Naive thymus-derived CD8-positive, alpha-beta T cell (primary cell): ENCODE measurements at regions of chr12 and their contacts with region 1.

Region 1: DNA sequence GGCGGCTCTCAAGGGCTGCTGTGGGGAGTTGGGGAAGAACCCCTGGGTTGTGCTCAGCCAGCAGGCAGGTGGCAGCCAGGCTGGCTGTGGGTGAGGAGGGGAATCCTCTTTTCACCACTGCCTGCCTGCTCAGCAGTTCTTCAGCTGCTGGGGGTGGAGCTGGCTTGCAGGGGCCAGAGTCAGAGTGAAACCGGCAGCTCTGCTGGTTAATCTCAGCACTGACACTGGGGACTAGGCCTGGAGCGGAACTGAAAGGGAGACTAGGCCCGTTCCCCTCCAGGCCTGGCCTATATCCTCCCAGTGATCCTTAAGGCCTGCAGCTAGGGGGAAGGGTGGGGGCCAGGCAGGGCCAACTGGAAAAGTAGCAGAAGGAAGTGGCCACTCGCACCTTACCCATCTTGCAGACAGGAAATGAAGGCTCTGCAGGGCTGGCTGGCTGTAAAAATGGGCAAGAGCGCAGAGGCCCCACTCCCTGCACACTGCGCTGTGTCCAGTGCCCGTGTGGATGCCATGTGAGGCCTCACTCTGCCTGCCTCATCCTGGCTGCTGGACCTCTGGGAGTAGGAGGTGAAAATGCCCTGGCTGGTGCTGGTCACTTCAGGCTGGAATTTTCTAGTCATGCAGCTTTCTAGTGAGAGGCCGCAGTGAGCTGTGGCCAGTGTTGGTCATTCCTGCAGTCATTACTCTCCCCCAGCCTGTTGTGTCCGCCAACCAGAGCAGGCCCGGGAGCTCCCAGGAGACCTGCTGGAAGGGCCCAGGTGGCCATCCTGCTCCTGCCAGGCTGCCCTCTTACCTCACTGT is 39.4 kb downstream of the SH2B3 start:
- DNase-seq: peak; percentile 44 to 83 (median 70)
- ATAC-seq: peak; percentile 98 to 99
- H3K4me3 Mint-ChIP-seq: peak overlapping the region in 9 of 10 donors; percentile 39 to 77 (median 71)
- H3K27ac Mint-ChIP-seq: peak overlapping the region; percentile 73 to 95 (median 90)
- H3K4me1 Mint-ChIP-seq: peaks cover 29 to 83% (median 67%) of the 10 kb centered on the region in 4 donors
- H3K27me3 Mint-ChIP-seq: no peaks in the 10 kb centered on the region

Region 2: DNA sequence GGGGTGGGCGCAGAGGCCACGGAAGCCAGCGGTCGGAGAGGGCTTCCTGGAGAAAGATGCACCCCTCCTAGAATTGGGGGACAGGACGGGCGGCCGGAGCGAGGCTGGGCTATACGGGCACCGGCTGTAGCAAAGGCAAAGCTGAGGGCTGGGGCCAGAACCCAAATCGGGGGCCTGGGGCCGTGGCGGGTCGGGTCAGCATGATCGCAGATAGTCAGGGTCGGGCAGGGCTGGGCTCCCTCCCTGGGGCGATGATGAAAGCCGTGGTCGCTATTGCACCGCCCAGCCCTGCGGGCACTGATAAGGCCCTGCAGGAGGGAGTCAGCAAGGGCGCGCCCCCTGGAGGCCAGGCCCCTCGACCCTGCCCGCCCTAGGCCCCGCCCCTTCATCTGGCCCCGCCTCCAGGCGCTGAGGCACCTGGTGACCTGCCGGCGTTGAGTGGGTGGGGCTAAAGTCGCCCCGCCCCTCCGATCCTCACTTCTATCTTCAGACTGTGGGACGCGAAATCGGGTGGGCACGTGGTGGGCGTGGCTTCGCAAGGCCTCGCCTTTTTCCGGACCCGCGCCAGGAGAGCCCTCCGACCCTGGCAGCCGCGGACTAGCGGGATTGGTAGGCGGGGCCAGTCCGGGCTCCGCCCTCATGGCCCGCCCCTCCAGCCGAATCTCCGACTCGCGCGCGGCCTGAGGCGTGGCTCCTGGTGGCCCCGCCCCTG is 39.8 kb before region 1 on chr12:
- POLR2A ChIA-PET with region 1: interaction called, 10 read pairs
- DNase-seq: peak; percentile 96 to 100 (median 98)
- ATAC-seq: peak; percentile 69 to 80
- H3K4me3 Mint-ChIP-seq: peak overlapping the region; percentile 81 to 94 (median 91)
- H3K27ac Mint-ChIP-seq: peak overlapping the region; percentile 63 to 92 (median 90)
- H3K4me1 Mint-ChIP-seq: peaks cover 23 to 61% (median 58%) of the 10 kb centered on the region in 4 donors
- H3K27me3 Mint-ChIP-seq: no peaks in the 10 kb centered on the region